Heart right ventricle (tissue), 16 donors: ENCODE measurements at regions of chr12 and their contacts with region 1.

Region 1: DNA sequence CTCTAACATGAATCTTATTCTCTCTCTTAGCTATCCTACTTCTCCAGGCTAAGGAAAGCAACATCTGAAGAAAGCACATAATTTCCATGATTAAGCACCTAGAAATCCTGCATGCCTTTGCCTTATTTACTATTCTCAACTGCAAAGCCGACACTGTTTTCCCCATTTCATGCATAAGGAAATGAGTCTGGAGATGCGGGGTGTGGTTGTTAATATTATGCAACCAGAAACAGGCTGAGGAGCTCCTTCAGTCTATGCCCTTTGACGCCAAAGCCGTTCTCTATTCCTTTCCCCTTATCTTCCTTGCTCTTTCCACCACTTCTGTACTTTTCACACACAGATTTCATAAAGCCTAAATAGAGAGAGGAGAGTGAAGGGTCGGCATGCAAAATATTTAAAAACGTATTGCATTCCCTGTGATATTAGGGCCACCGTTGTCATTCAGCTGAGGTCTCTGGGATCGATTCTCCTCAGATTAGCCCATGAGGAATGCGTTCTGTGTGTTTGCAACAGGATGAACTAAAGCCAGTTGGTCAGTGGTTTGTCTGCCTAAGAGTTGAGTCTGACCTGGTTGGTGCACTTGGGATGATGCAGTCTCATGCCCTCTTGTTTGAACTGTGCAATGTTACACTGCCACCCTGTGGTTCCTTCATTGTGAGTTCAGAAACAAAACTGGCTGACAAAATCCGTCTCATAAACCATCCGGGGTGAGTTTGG is 53.1 kb upstream of the PLEKHG7 start:
- DNase-seq: peak in 1 of 2 donors; percentile 74
- ATAC-seq: peak; percentile 80 to 95 (median 88)
- H3K4me3 ChIP-seq: no peak overlapping the region
- H3K27ac ChIP-seq: no peak overlapping the region
- H3K4me1 ChIP-seq: peaks cover 0 to 13% (median 0%) of the 10 kb centered on the region in 9 donors
- H3K27me3 ChIP-seq: no peaks in the 10 kb centered on the region
- CTCF ChIP-seq: peak in 8 of 9 donors; percentile 59 to 79 (median 72)

Region 2: GRCh38 chr12:91361864-91362263 is 1287.8 kb before region 1 on chr12:
- intact Hi-C with region 1: loop called in 5 of 10 experiments (anchors 2 to 10 kb)
- DNase-seq: no peak
- ATAC-seq: peak in 3 of 8 donors; percentile 34 to 58 (median 39)
- H3K4me3 ChIP-seq: no peak overlapping the region
- H3K27ac ChIP-seq: no peak overlapping the region
- H3K4me1 ChIP-seq: peaks cover 0 to 8% (median 0%) of the 10 kb centered on the region in 9 donors
- H3K27me3 ChIP-seq: no peaks in the 10 kb centered on the region
- CTCF ChIP-seq: peak; percentile 36 to 81 (median 71)

Region 3: GRCh38 chr12:91367234-91367849 is 1282.3 kb before region 1 on chr12:
- intact Hi-C with region 1: loop called in 4 of 10 experiments (anchors 5 to 10 kb)
- DNase-seq: no peak
- ATAC-seq: no peak
- H3K4me3 ChIP-seq: no peak overlapping the region
- H3K27ac ChIP-seq: no peak overlapping the region
- H3K4me1 ChIP-seq: peaks cover 0 to 4% (median 0%) of the 10 kb centered on the region in 9 donors
- H3K27me3 ChIP-seq: no peaks in the 10 kb centered on the region
- CTCF ChIP-seq: peak in 7 of 9 donors; percentile 9 to 46 (median 33)

Region 4: GRCh38 chr12:91804533-91804932 is 845.1 kb before region 1 on chr12:
- intact Hi-C with region 1: loop called in 1 of 10 experiments (anchors 10 kb)
- DNase-seq: no peak
- ATAC-seq: no peak
- H3K4me3 ChIP-seq: no peak overlapping the region
- H3K27ac ChIP-seq: no peak overlapping the region
- H3K4me1 ChIP-seq: no peaks in the 10 kb centered on the region
- H3K27me3 ChIP-seq: no peaks in the 10 kb centered on the region
- CTCF ChIP-seq: no peak